GM12878 (cell line): ENCODE measurements at regions of chr12 and their contacts with region 1.

Region 1: DNA sequence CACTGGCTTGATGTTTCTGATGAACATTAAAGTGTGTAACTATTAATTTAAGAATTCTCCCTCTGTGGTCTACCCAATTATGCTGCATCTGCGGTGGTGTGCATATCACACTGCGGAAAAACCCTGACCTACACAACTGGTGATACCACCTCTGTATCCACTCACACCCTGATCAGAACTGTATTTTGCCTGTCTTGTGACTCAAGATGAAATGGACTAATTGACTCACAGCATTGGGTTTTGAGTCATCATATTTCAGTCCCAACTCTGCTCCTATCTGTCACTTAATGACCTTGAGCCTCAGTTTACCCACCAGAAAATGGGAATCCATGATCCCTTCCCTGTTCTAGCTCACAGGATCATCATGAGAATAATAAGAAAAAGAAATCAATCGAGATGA is 65.6 kb downstream of the NUAK1 start:
- DNase-seq: peak; percentile 42
- ATAC-seq: peak; percentile 94
- H3K4me3 ChIP-seq: no peak overlapping the region
- H3K27ac ChIP-seq: no peak overlapping the region
- H3K4me1 ChIP-seq: no peaks in the 10 kb centered on the region; the same call in 1 of the 2 replicates
- H3K27me3 ChIP-seq: no peaks in the 10 kb centered on the region; a peak in 1 of 4 replicates
- CTCF ChIP-seq: no peak
- EP300 ChIP-seq: peak; percentile 80 to 97; a peak in 3 of 4 replicates
- POLR2A ChIP-seq: no peak
- RAD21 ChIP-seq: no peak

Region 2: DNA sequence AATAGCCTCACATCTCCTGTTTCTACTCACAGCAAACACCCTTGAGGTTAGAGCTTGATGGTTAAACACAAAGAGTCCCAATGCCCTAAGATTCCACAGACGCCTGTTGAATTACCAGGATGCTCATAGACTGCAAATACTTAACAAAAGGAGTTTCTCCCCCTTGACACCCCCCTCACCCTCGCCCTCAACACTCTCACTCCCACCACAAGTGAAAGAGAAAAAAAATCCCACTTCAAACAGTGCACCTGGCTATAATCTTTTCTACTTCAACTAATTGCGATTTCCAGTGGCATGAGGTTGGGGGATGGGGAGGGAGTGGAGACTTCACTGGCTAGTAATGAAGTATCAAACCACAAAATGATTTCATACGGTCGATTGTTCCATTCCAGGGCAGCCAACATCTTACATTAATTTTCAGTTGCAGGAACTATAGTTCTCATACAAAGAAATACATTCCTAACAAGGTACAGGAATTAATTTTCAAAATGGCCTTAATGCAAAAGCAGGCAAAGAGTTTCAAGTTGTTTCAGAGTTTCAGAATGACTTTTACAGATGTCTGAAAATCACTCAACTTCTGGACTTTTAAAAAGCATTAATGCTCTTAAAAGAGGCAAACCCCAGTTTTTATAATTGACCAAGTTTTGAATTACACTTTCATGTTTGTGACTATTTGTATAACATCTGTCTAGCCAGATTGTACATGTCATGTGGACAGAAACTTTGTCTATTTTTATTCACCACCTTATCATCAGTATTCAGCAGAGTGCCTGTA is 351.9 kb before region 1 on chr12:
- CTCF ChIA-PET with region 1: no interaction called
- POLR2A ChIA-PET with region 1: no interaction called
- RAD21 ChIA-PET with region 1: no interaction called
- SMC1A ChIA-PET with region 1: no interaction called
- in situ Hi-C with region 1: no loop called
- intact Hi-C with region 1: loop called (anchors 1 kb)
- DNase-seq: peak; percentile 38
- ATAC-seq: peak; percentile 80
- H3K4me3 ChIP-seq: no peak overlapping the region
- H3K27ac ChIP-seq: no peak overlapping the region
- H3K4me1 ChIP-seq: peaks cover 7% of the 10 kb centered on the region; the same call in 1 of the 2 replicates
- H3K27me3 ChIP-seq: peaks cover 0 to 3% of the 10 kb centered on the region in 2 experiments; a peak in 2 of 4 replicates
- CTCF ChIP-seq: no peak
- EP300 ChIP-seq: no peak
- POLR2A ChIP-seq: no peak
- RAD21 ChIP-seq: no peak

Region 3: DNA sequence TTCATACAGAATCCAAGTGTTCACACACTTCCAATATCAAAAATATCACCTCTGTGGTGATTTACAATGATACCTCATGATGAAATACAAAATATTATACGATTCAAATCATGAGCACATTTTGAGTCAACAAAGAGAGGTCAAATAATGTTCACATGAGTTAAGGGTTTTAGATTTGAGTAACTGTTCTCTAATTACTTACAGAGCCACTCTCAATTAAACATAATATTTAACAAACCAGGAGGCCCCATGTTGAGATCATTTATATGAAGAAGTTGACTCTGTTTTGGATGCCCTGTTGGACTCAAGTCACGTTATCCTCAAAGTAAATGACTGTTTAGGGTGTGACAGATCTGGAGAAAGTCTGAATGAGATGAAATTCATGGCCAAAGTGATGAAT is 12.0 kb after region 1 on chr12:
- CTCF ChIA-PET with region 1: no interaction called
- POLR2A ChIA-PET with region 1: no interaction called
- RAD21 ChIA-PET with region 1: interaction called, 3 read pairs
- SMC1A ChIA-PET with region 1: no interaction called
- in situ Hi-C with region 1: no loop called
- intact Hi-C with region 1: loop called (anchors 1 kb)
- DNase-seq: no peak
- ATAC-seq: peak; percentile 73
- H3K4me3 ChIP-seq: no peak overlapping the region
- H3K27ac ChIP-seq: no peak overlapping the region
- H3K4me1 ChIP-seq: no peaks in the 10 kb centered on the region
- H3K27me3 ChIP-seq: peaks cover 0 to 4% of the 10 kb centered on the region in 2 experiments; a peak in 2 of 4 replicates
- CTCF ChIP-seq: no peak
- EP300 ChIP-seq: peak; percentile 82 to 85; a peak in 3 of 4 replicates
- POLR2A ChIP-seq: no peak
- RAD21 ChIP-seq: no peak